T-cell (primary cell): ENCODE measurements at regions of chr7 and their contacts with region 1.

Region 1: GRCh38 chr7:99021941-99022560 is 121.9 kb downstream of the SMURF1 start:
- DNase-seq: no peak
- ATAC-seq: no peak
- H3K4me3 ChIP-seq: no peak overlapping the region
- H3K4me3 Mint-ChIP-seq: no peak overlapping the region
- H3K27ac ChIP-seq: no peak overlapping the region
- H3K27ac Mint-ChIP-seq: no peak overlapping the region
- H3K4me1 ChIP-seq: no peaks in the 10 kb centered on the region
- H3K4me1 Mint-ChIP-seq: peaks cover 4 to 25% (median 10%) of the 10 kb centered on the region in 3 donors
- H3K27me3 ChIP-seq: no peaks in the 10 kb centered on the region
- H3K27me3 Mint-ChIP-seq: no peaks in the 10 kb centered on the region

Region 2: DNA sequence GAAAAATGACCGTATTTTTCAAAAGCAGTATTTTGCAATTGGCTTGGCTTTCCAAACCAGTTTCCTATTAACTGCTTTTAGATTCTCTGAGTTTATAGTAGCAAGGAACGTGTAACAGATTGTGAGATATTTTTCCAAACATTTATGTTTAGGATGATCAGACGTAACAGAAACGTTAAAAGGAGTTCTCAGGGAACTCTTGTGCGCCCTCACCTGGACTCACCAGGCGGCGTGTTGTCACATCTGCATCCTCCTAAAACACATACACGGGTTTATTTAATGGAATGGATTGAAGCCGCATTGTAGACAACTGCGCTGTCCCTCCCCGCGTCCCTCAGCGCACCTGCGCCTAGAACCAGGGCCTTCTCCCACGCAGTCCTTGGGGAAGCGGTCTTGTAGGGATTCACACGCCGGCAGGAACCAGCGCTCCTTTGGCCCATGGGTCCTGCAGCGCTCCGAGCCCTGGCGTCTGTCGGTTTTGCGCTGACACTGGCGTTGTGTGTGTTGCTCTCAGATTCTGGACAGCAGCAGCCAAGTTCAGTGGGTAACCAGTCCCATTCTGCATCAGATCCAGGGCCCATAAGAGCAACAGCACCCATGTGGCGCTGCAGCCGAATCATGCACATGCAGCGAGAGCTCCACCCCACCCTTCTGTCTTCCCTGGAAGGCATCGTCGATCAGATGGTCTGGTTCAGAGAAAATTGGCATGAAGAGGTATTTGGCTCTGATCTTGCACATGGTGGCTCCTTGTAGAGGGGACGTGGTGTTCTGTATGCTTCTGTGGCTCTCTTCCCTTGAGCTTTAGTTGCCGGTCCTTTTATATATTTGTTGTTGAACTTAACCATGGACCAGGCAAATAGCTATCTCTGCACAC is 28.8 kb before region 1 on chr7:
- CTCF ChIA-PET with region 1: no interaction called
- POLR2A ChIA-PET with region 1: interaction called in 1 of 2 experiments, 10 read pairs
- DNase-seq: no peak
- ATAC-seq: no peak
- H3K4me3 ChIP-seq: no peak overlapping the region
- H3K4me3 Mint-ChIP-seq: no peak overlapping the region
- H3K27ac ChIP-seq: no peak overlapping the region
- H3K27ac Mint-ChIP-seq: no peak overlapping the region
- H3K4me1 ChIP-seq: peaks cover 5 to 15% of the 10 kb centered on the region in 2 experiments
- H3K4me1 Mint-ChIP-seq: peaks cover 8 to 24% (median 17%) of the 10 kb centered on the region in 3 donors
- H3K27me3 ChIP-seq: no peaks in the 10 kb centered on the region
- H3K27me3 Mint-ChIP-seq: no peaks in the 10 kb centered on the region

Region 3: GRCh38 chr7:99098824-99099498 is 76.9 kb after region 1 on chr7:
- CTCF ChIA-PET with region 1: no interaction called
- POLR2A ChIA-PET with region 1: no interaction called
- DNase-seq: no peak
- ATAC-seq: no peak
- H3K4me3 ChIP-seq: no peak overlapping the region
- H3K4me3 Mint-ChIP-seq: no peak overlapping the region
- H3K27ac ChIP-seq: no peak overlapping the region
- H3K27ac Mint-ChIP-seq: no peak overlapping the region
- H3K4me1 ChIP-seq: peaks cover 0 to 3% of the 10 kb centered on the region in 2 experiments
- H3K4me1 Mint-ChIP-seq: peaks cover 24 to 46% (median 45%) of the 10 kb centered on the region in 3 donors
- H3K27me3 ChIP-seq: no peaks in the 10 kb centered on the region
- H3K27me3 Mint-ChIP-seq: no peaks in the 10 kb centered on the region